CD4-positive, alpha-beta memory T cell (primary cell): ENCODE measurements at regions of chr20 and their contacts with region 1.

Region 1: DNA sequence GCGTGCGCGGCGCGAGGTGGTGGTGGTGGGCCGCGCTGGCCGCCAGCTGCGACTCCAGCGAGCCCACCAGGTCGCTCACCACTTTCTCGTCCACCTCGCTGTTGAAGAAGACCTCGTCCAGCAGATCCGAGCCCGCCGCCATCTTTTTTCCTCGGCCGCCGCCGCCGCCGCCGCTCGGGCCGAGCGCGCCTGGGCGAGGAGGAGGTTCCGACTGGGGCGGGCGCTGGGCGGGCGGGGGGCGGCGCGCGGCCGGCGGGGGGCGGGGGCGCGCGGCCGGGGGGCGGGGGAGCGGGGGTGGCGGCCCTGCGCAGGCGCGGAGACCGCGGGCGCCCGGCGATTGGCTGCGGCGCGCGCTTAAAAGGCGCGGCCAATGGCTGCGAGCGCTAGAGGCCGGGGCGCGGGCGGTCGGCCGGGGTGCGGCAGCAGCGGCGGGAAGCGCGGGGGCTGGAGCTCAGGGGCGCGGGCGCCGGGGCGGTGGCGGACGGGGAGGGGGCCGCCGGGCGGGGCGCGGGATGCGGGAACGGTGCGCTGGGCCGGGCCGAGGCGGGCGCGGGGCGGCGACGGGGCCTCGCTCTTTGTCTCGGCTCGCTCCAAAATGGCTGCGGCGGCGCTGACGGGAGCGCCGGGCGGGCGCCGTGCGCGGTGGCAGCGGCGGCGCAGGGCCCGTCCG is at the start of gene TAF4:
- DNase-seq: peak; percentile 73 to 88 (median 83)
- H3K4me3 ChIP-seq: peak within 1 kb of the TSS; percentile 5 to 76
- H3K4me3 Mint-ChIP-seq: peak within 1 kb of the TSS; percentile 86 to 94 (median 89)
- H3K27ac ChIP-seq: peak within 1 kb of the TSS; percentile 70
- H3K27ac Mint-ChIP-seq: peak within 1 kb of the TSS; percentile 85 to 94 (median 92)
- H3K4me1 ChIP-seq: peaks cover 48% of the 10 kb centered on the region
- H3K4me1 Mint-ChIP-seq: peaks cover 31 to 59% (median 46%) of the 10 kb centered on the region in 4 donors
- H3K27me3 ChIP-seq: no peaks in the 10 kb centered on the region
- H3K27me3 Mint-ChIP-seq: no peaks in the 10 kb centered on the region
- total RNA-seq, gene TAF4: 32.7 to 33.1 TPM

Region 2: DNA sequence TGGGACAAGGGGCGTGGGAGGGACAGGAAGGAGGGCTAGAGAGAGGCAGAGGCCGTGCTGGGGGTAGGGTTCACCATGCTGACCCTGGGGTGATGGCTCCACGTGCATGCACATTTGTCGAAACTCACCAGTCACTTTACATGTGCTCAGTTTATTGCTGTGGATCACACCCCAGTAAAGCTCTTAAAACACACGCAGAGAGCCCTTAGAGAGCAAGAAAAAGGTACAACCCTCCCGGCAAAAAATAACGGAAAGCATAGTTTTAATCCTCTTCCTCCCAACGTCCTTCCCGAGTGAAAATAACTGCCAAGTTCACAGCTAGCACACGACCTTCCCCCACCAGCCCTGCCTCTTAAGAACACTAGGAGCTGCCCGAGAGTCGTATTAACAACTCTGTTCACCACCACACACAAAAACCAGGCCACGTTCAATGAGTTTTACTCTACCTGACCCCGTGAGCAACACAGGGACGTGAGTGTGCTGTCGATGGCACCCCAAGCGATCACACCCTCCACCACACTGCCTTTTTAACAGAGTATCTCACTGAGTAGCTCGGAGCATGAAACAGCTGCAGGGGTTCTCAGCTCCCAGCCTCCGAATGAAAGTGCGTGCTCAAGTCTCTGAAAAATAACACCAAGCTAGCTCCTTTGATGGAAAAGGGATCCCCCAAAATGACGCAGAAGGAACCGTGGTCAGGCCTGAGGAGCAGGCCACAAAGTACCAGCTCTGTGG is 39.8 kb before region 1 on chr20:
- CTCF ChIA-PET with region 1: no interaction called
- POLR2A ChIA-PET with region 1: interaction called, 22 read pairs
- intact Hi-C with region 1: no loop called
- DNase-seq: peak in 1 of 5 donors; percentile 14
- H3K4me3 ChIP-seq: no peak overlapping the region
- H3K4me3 Mint-ChIP-seq: peak overlapping the region in 1 of 8 donors; percentile 39
- H3K27ac ChIP-seq: no peak overlapping the region
- H3K27ac Mint-ChIP-seq: peak overlapping the region in 6 of 7 donors; percentile 23 to 73 (median 41)
- H3K4me1 ChIP-seq: peaks cover 20% of the 10 kb centered on the region
- H3K4me1 Mint-ChIP-seq: peaks cover 30 to 69% (median 32%) of the 10 kb centered on the region in 4 donors
- H3K27me3 ChIP-seq: no peaks in the 10 kb centered on the region
- H3K27me3 Mint-ChIP-seq: no peaks in the 10 kb centered on the region

Region 3: GRCh38 chr20:62040933-62041332 is 24.9 kb before region 1 on chr20:
- CTCF ChIA-PET with region 1: no interaction called
- POLR2A ChIA-PET with region 1: no interaction called
- intact Hi-C with region 1: no loop called
- DNase-seq: no peak
- H3K4me3 ChIP-seq: no peak overlapping the region
- H3K4me3 Mint-ChIP-seq: no peak overlapping the region
- H3K27ac ChIP-seq: no peak overlapping the region
- H3K27ac Mint-ChIP-seq: no peak overlapping the region
- H3K4me1 ChIP-seq: no peaks in the 10 kb centered on the region
- H3K4me1 Mint-ChIP-seq: peaks cover 36 to 73% (median 40%) of the 10 kb centered on the region in 4 donors
- H3K27me3 ChIP-seq: no peaks in the 10 kb centered on the region
- H3K27me3 Mint-ChIP-seq: no peaks in the 10 kb centered on the region

Region 4: GRCh38 chr20:62136283-62137091 is 70.7 kb after region 1 on chr20:
- CTCF ChIA-PET with region 1: interaction called, 8 read pairs
- POLR2A ChIA-PET with region 1: interaction called, 64 read pairs
- intact Hi-C with region 1: loop called (anchors 2 kb)
- DNase-seq: peak; percentile 69 to 74 (median 74)
- H3K4me3 ChIP-seq: no peak overlapping the region
- H3K4me3 Mint-ChIP-seq: peak overlapping the region in 1 of 8 donors; percentile 50
- H3K27ac ChIP-seq: no peak overlapping the region
- H3K27ac Mint-ChIP-seq: peak overlapping the region; percentile 33 to 93 (median 91)
- H3K4me1 ChIP-seq: peaks cover 19% of the 10 kb centered on the region
- H3K4me1 Mint-ChIP-seq: peaks cover 30 to 57% (median 37%) of the 10 kb centered on the region in 4 donors
- H3K27me3 ChIP-seq: no peaks in the 10 kb centered on the region
- H3K27me3 Mint-ChIP-seq: no peaks in the 10 kb centered on the region

Region 5: GRCh38 chr20:62182613-62183425 is 117.0 kb after region 1 on chr20 and contains the start of gene MTG2:
- CTCF ChIA-PET with region 1: no interaction called
- POLR2A ChIA-PET with region 1: interaction called, 4 read pairs
- intact Hi-C with region 1: loop called (anchors 2 kb)
- DNase-seq: peak; percentile 91 to 96 (median 93)
- H3K4me3 ChIP-seq: peak within 1 kb of the TSS; percentile 53 to 92
- H3K4me3 Mint-ChIP-seq: peak within 1 kb of the TSS; percentile 91 to 97 (median 92)
- H3K27ac ChIP-seq: peak within 1 kb of the TSS; percentile 94
- H3K27ac Mint-ChIP-seq: peak within 1 kb of the TSS; percentile 93 to 98 (median 96)
- H3K4me1 ChIP-seq: peaks cover 22% of the 10 kb centered on the region
- H3K4me1 Mint-ChIP-seq: peaks cover 23 to 51% (median 37%) of the 10 kb centered on the region in 4 donors
- H3K27me3 ChIP-seq: no peaks in the 10 kb centered on the region
- H3K27me3 Mint-ChIP-seq: no peaks in the 10 kb centered on the region
- total RNA-seq, gene MTG2: 48.5 to 50.7 TPM

Region 6: DNA sequence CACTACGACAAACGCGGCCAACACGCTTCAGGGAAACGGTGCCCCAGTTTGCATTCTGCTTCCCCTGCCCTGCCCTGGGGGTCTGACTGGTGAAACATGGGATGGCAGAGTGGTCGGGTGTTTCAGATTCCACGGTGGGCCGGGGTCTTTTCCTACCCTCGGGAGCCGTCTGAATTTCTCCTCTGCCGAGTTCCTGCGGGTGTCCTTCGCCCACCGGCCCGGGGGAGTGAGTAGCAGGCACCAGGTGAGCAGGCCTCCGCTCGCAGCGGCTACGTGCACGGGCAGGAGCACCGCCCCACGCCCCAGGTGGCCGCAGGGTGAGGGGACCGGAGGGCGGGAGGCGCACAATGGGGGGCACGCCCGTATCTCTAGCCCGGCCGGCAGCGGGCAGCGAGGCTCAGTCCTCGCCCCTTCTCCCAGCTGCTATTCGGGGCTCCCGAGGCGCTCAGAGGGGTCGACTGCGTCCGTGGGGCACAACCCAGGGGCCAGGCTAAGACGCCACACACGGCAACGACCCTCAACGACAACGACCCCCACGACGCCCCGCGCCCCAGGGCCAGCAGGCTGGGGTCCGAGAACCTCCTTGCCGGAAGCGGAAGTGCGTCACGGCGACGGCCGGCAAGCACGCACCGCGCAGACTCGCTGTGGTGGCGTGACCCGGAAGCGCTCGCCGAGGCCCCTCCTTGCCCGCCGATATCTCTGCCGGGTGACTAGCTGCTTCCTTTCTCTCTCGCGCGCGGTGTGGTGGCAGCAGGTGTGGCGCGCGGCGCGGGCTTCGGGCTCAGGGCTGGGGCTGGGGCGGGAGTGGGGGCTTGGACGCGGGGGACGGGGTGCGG is 320.8 kb after region 1 on chr20 and contains the start of gene RPS21:
- CTCF ChIA-PET with region 1: no interaction called
- POLR2A ChIA-PET with region 1: no interaction called
- intact Hi-C with region 1: loop called (anchors 10 kb)
- DNase-seq: peak; percentile 92 to 94 (median 94)
- H3K4me3 ChIP-seq: peak within 1 kb of the TSS; percentile 88 to 90
- H3K4me3 Mint-ChIP-seq: peak within 1 kb of the TSS; percentile 90 to 95 (median 92)
- H3K27ac ChIP-seq: peak within 1 kb of the TSS; percentile 95
- H3K27ac Mint-ChIP-seq: peak within 1 kb of the TSS; percentile 91 to 98 (median 96)
- H3K4me1 ChIP-seq: peaks cover 36% of the 10 kb centered on the region
- H3K4me1 Mint-ChIP-seq: peaks cover 30 to 61% (median 47%) of the 10 kb centered on the region in 4 donors
- H3K27me3 ChIP-seq: no peaks in the 10 kb centered on the region
- H3K27me3 Mint-ChIP-seq: no peaks in the 10 kb centered on the region
- total RNA-seq, gene RPS21: 3,142 to 3,368 TPM